ENCODE measurements at regions of chr15 and their contacts with region 1.

Region 1: DNA sequence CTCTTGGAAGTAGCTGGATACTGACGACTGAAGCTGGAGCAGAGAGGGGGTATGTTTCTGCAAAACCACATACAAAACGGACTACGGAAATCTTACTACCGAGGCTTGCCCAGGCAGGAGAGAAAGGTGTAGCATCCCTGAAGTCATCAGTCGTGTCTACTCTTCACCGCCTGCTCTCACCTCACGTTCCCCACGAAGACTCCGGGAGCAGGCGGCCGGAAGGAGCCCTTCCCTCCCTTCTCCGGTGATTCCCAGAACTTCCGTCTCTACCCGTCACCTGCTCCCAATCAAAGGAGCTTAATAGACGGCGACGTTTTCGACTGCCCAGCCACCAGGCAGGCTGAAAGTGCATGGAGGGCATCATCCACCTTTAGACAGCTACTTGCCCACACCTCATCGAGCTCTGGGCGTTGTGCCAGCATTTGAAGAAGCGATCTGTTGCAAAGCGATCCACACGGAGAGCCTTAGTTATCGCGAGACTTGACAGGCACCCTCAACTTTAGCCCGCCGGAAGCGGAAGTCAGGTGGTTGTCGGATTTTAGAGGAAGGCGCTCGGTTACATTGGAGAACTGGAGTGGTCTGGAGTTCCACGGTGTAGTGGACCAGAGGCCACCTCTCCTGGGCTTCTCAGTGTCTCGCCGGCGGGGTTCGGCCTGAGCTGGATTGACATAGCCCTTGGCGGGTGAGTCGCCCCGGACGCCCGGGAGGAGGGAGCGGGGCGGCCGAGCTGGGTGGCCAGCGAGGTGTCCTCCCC is at the start of gene RAMAC:
- DNase-seq: peak; percentile 97
- ATAC-seq: peak; percentile 95
- H3K4me3 Mint-ChIP-seq: peak within 1 kb of the TSS; percentile 96
- H3K27ac Mint-ChIP-seq: peak within 1 kb of the TSS; percentile 96
- H3K4me1 Mint-ChIP-seq: peaks cover 20% of the 10 kb centered on the region
- H3K27me3 Mint-ChIP-seq: no peaks in the 10 kb centered on the region
- CTCF ChIP-seq: no peak
- total RNA-seq, gene RAMAC: 18.2 to 19.7 TPM

Region 2: GRCh38 chr15:82809404-82810060 is 176.3 kb before region 1 on chr15 and contains the start of gene WHAMM:
- CTCF ChIA-PET with region 1: interaction called, 3 read pairs
- POLR2A ChIA-PET with region 1: interaction called, 10 read pairs
- intact Hi-C with region 1: no loop called
- DNase-seq: peak; percentile 98
- ATAC-seq: peak; percentile 96
- H3K4me3 Mint-ChIP-seq: peak within 1 kb of the TSS; percentile 84
- H3K27ac Mint-ChIP-seq: peak within 1 kb of the TSS; percentile 92
- H3K4me1 Mint-ChIP-seq: peaks cover 30% of the 10 kb centered on the region
- H3K27me3 Mint-ChIP-seq: no peaks in the 10 kb centered on the region
- CTCF ChIP-seq: no peak
- total RNA-seq, gene WHAMM: 5.8 to 6.1 TPM

Region 3: DNA sequence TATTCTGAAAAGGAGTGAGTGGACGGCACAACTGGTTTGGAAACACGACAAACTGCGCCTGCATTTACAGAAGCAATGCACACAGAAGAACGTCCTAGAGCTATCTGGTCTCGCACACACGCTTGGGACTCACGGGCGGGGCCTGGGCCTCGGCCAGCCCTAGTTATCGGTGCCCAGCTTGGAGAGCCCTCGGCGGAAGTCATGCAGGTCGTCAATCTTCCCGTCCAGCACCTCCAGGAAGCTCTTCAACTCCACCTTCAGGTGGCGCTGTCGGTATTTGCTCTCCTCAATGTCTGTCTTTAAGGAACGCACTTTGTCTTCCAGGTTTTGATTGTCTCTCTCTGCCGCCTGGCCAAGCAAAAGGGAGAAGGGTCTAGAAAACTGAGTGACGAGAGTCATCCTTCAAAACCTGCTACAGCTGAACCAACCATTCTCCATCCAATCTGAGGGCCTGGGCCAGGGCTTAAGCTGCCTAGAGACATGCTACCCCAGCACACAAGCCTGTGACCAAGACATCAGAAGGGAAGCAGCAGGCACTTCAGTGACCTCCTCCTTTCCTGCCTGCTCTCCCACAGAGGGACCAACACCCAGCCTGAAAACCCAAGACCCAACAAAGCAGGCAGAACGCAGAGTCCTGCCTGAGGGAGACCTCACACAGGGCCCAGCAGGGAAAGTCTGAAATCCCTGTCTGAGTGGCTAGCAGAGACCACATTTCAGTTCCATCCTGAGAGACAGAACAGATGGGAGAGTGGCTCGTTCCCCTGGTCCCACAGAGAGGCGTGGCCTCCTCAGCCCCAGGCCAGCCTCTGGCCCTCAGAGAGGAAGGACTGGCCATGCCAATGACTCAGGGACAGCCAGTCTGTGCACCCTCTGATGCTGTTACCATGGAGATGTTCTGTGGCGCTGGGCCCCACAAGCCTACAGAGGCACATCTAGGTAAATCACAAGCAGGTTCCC is 136.0 kb before region 1 on chr15:
- CTCF ChIA-PET with region 1: interaction called, 11 read pairs
- POLR2A ChIA-PET with region 1: no interaction called
- intact Hi-C with region 1: no loop called
- DNase-seq: peak; percentile 69
- ATAC-seq: peak; percentile 83
- H3K4me3 Mint-ChIP-seq: no peak overlapping the region
- H3K27ac Mint-ChIP-seq: no peak overlapping the region
- H3K4me1 Mint-ChIP-seq: peaks cover 14% of the 10 kb centered on the region
- H3K27me3 Mint-ChIP-seq: no peaks in the 10 kb centered on the region
- CTCF ChIP-seq: peak; percentile 73

Region 4: DNA sequence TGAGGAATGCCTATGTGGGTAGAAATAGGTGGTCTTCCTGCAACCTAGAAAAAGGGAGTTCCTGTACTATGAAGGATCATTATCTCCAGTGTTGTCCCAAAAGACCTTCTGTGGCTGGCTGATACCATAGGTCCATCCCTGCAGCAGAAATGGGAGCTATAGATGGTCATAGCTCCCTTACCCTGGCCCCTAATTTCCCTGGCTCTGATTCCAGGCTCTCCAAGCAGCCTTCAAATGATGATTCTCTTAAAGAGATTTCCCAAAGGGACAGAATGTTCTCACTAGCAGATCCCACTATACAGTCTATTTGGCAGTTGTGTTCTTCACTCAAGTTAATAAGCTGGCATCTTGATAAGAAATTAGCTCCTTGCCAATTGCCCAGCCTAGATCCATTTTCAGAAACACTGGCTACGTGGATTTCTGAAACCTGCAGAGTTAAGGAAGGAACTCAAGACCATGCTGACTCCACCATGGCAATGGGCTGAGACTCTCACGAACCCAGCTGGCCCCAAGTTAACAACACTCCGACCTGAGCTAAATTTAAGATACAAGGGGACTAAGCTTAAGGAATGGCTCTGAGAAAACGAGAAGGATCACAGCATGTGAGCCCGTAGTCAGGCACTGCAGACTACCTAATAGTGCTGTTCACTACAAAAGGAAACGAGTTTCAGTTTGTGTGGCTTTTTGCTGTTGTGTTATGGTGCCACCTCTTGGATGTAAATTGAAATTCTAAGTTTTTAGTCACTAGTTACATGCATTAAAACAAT is 14.2 kb after region 1 on chr15:
- CTCF ChIA-PET with region 1: interaction called, 26 read pairs
- POLR2A ChIA-PET with region 1: interaction called, 6 read pairs
- intact Hi-C with region 1: no loop called
- DNase-seq: peak; percentile 38
- ATAC-seq: peak; percentile 93
- H3K4me3 Mint-ChIP-seq: peak overlapping the region; percentile 53
- H3K27ac Mint-ChIP-seq: peak overlapping the region; percentile 70
- H3K4me1 Mint-ChIP-seq: peaks cover 9% of the 10 kb centered on the region
- H3K27me3 Mint-ChIP-seq: no peaks in the 10 kb centered on the region
- CTCF ChIP-seq: peak; percentile 77

Region 5: DNA sequence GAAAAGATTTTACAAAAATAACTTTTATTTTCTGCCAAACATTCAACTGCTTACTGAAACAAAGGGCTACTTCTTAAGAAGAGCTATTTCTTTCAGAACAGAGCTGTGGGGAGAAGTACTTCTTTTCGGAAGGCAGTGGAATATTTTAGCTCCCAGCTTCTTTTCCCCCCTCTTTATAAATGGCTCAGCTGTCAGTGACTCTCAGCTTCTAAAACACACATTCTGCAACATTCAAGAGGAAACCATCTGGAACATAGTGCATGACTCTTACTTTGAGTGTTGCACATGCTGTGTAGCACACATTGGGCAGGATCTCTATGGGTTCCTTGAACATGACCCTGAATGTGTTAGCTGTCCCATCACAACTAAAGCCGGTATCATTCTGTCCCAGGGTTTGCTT is 32.6 kb after region 1 on chr15:
- CTCF ChIA-PET with region 1: no interaction called
- POLR2A ChIA-PET with region 1: no interaction called
- intact Hi-C with region 1: no loop called
- DNase-seq: no peak
- ATAC-seq: no peak
- H3K4me3 Mint-ChIP-seq: no peak overlapping the region
- H3K27ac Mint-ChIP-seq: peak overlapping the region; percentile 46
- H3K4me1 Mint-ChIP-seq: peaks cover 26% of the 10 kb centered on the region
- H3K27me3 Mint-ChIP-seq: no peaks in the 10 kb centered on the region
- CTCF ChIP-seq: no peak

Region 6: GRCh38 chr15:83081256-83082014 is 95.6 kb after region 1 on chr15:
- CTCF ChIA-PET with region 1: no interaction called
- POLR2A ChIA-PET with region 1: no interaction called
- intact Hi-C with region 1: no loop called
- DNase-seq: no peak
- ATAC-seq: no peak
- H3K4me3 Mint-ChIP-seq: no peak overlapping the region
- H3K27ac Mint-ChIP-seq: no peak overlapping the region
- H3K4me1 Mint-ChIP-seq: peaks cover 4% of the 10 kb centered on the region
- H3K27me3 Mint-ChIP-seq: peaks cover 20% of the 10 kb centered on the region
- CTCF ChIP-seq: no peak

Measured in activated CD8-positive, alpha-beta T cell treated with anti-CD3 and anti-CD28 coated beads for 36 hours (primary cell).